ENCODE measurements at regions of chr12 and their contacts with region 1.

Region 1: DNA sequence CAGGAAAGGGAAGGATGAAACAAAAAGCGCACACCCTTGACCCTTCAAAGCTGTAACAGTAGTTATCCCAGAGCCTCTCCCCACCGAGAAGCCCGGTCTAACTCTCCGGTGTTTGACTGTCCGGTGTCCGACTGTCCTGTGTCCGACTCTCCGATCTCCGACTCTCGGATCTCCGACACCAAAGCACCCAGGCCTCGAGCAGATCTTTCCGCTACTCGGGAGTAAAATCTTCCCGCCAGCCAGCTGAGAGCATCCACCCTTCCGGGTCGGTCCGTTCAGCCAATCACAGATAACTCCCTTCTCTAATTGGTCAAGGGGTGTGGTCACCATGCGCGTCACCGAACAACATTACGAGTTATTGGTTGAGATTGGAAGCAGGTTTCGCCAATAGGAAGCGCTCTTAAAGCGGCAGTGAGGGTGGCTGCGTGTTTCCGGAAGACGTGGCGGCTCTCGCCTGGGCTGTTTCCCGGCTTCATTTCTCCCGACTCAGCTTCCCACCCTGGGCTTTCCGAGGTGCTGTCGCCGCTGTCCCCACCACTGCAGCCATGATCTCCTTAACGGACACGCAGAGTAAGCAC is at the starts of genes GOLT1B and RECQL:
- DNase-seq: peak; percentile 94 to 96
- ATAC-seq: peak; percentile 100
- H3K4me3 ChIP-seq: peak within 1 kb of the TSS; percentile 89 to 99 (median 97)
- H3K27ac ChIP-seq: peak within 1 kb of the TSS; percentile 85 to 91 (median 88)
- H3K4me1 ChIP-seq: peaks cover 42 to 45% of the 10 kb centered on the region in 2 donors
- H3K27me3 ChIP-seq: no peaks in the 10 kb centered on the region
- CTCF ChIP-seq: no peak
- POLR2A ChIP-seq: peak; percentile 55 to 74
- total RNA-seq, gene GOLT1B: 14.7 to 34.3 (median 27.0) TPM
- total RNA-seq, gene RECQL: 14.0 to 32.5 (median 22.3) TPM

Region 2: GRCh38 chr12:21392384-21392783 is 109.1 kb before region 1 on chr12:
- in situ Hi-C with region 1: no loop called
- intact Hi-C with region 1: no loop called
- DNase-seq: no peak
- ATAC-seq: no peak
- H3K4me3 ChIP-seq: no peak overlapping the region
- H3K27ac ChIP-seq: no peak overlapping the region
- H3K4me1 ChIP-seq: no peaks in the 10 kb centered on the region
- H3K27me3 ChIP-seq: no peaks in the 10 kb centered on the region
- CTCF ChIP-seq: no peak
- POLR2A ChIP-seq: no peak

Region 3: DNA sequence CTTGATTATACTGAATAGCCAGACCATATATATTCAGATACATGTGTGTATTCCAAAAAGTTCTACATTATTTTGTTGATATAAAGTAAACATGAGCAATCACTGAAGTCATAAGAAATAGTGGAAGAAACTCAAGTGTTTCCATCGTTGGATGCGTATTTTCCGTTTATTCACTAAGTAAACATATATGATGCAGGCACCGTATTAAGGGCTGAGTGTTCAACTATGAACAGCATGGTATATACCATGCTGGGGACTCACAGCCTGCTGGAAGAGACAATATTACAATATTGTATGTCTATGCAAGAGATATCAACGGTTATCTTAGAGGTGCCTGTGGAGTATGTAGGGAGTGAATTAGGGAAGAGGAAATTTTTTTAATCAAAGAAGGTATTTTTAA is 62.8 kb before region 1 on chr12:
- in situ Hi-C with region 1: no loop called
- intact Hi-C with region 1: loop called (anchors 1 kb)
- DNase-seq: no peak
- ATAC-seq: no peak
- H3K4me3 ChIP-seq: peak overlapping the region; percentile 59 to 94 (median 81)
- H3K27ac ChIP-seq: peak overlapping the region in 3 of 4 donors; percentile 72 to 94 (median 88)
- H3K4me1 ChIP-seq: peaks cover 7 to 9% of the 10 kb centered on the region in 2 donors
- H3K27me3 ChIP-seq: peaks cover 0 to 4% (median 0%) of the 10 kb centered on the region in 3 donors
- CTCF ChIP-seq: no peak
- POLR2A ChIP-seq: no peak

Region 4: DNA sequence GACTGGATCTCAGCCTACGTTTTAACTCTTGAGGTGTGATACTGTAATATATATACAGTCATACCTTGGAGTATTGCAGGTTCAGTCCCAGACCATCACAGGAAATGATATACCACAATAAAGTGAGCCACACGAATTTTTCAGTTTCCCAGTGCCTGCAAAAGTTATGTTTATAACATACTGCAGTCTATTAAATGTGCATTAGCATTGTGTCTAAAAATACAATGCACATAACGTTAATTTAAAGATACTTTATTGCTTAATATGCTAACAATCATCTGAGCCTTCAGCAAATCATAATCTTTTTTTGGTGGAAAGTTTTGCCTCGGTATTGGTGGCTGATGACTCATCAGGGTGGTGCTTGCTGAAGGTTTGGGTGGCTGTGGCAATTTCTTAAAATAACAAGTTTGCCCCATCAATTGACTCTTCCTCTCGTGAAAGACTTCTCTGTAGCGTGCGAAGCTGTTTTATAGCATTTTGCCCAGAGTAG is 45.1 kb before region 1 on chr12:
- in situ Hi-C with region 1: no loop called
- intact Hi-C with region 1: no loop called
- DNase-seq: no peak
- ATAC-seq: no peak
- H3K4me3 ChIP-seq: no peak overlapping the region
- H3K27ac ChIP-seq: no peak overlapping the region
- H3K4me1 ChIP-seq: no peaks in the 10 kb centered on the region
- H3K27me3 ChIP-seq: no peaks in the 10 kb centered on the region
- CTCF ChIP-seq: no peak
- POLR2A ChIP-seq: no peak

Region 5: GRCh38 chr12:21627924-21628323 is 126.5 kb after region 1 on chr12:
- in situ Hi-C with region 1: no loop called
- intact Hi-C with region 1: no loop called
- DNase-seq: no peak
- ATAC-seq: no peak
- H3K4me3 ChIP-seq: no peak overlapping the region
- H3K27ac ChIP-seq: no peak overlapping the region
- H3K4me1 ChIP-seq: no peaks in the 10 kb centered on the region
- H3K27me3 ChIP-seq: no peaks in the 10 kb centered on the region
- CTCF ChIP-seq: no peak
- POLR2A ChIP-seq: no peak

Region 6: GRCh38 chr12:21657326-21658077 is 156.0 kb after region 1 on chr12 and contains the start of gene LDHB:
- in situ Hi-C with region 1: loop called in 1 of 4 experiments (anchors 10 kb)
- intact Hi-C with region 1: loop called (anchors 1 kb)
- DNase-seq: peak; percentile 84 to 91
- ATAC-seq: peak; percentile 93 to 95
- H3K4me3 ChIP-seq: peak within 1 kb of the TSS; percentile 75 to 88 (median 77)
- H3K27ac ChIP-seq: peak within 1 kb of the TSS; percentile 79 to 87 (median 82)
- H3K4me1 ChIP-seq: peaks cover 18% of the 10 kb centered on the region in 2 donors
- H3K27me3 ChIP-seq: no peaks in the 10 kb centered on the region
- CTCF ChIP-seq: no peak
- POLR2A ChIP-seq: peak; percentile 67 to 84
- total RNA-seq, gene LDHB: 76.4 to 229 (median 125) TPM

Region 7: GRCh38 chr12:21677622-21678277 is 176.3 kb after region 1 on chr12:
- in situ Hi-C with region 1: no loop called
- intact Hi-C with region 1: loop called (anchors 2 kb)
- DNase-seq: no peak
- ATAC-seq: no peak
- H3K4me3 ChIP-seq: no peak overlapping the region
- H3K27ac ChIP-seq: no peak overlapping the region
- H3K4me1 ChIP-seq: no peaks in the 10 kb centered on the region
- H3K27me3 ChIP-seq: no peaks in the 10 kb centered on the region
- CTCF ChIP-seq: no peak
- POLR2A ChIP-seq: no peak

Region 8: DNA sequence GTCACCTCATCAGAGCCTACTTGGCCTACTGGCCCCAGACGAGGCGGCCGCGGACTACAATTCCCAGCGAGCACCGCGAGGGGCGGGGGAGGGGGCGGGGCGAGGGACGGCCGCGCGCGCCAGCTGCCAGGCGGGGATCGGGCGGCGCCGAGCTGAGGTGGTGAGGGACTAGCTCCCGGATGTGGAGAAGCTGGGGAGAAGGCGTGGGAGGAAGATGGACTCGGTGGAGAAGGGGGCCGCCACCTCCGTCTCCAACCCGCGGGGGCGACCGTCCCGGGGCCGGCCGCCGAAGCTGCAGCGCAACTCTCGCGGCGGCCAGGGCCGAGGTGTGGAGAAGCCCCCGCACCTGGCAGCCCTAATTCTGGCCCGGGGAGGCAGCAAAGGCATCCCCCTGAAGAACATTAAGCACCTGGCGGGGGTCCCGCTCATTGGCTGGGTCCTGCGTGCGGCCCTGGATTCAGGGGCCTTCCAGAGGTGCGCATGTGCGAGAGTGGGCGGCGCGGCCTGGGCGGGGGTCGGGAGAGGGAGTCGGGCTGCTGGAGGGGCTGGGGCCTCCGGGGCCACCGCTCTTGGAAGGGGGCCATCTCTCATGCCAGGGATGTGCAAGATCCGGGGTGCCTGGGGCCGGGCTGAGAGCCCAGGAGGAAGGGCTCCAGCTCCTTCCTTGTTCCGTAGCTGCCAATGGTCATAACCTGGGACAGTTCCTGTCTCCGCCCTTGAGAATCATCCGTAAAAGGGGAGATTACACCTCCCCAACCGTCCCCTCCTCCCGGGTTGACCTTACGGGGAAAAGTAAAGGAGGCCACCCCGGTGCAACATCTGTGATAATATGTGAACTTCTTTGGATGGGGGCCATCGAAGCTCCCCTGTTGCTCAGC is 544.9 kb after region 1 on chr12 and contains the start of gene CMAS:
- in situ Hi-C with region 1: no loop called
- intact Hi-C with region 1: loop called (anchors 2 kb)
- DNase-seq: peak; percentile 53 to 65
- ATAC-seq: peak; percentile 88 to 92
- H3K4me3 ChIP-seq: peak within 1 kb of the TSS; percentile 94 to 100 (median 97)
- H3K27ac ChIP-seq: peak within 1 kb of the TSS; percentile 93 to 97 (median 94)
- H3K4me1 ChIP-seq: peaks cover 2 to 17% of the 10 kb centered on the region in 2 donors
- H3K27me3 ChIP-seq: no peaks in the 10 kb centered on the region
- CTCF ChIP-seq: no peak
- POLR2A ChIP-seq: peak; percentile 60 to 61
- total RNA-seq, gene CMAS: 28.2 to 33.4 (median 29.8) TPM